ENCODE measurements at regions of chr19 and their contacts with region 1.

Region 1: DNA sequence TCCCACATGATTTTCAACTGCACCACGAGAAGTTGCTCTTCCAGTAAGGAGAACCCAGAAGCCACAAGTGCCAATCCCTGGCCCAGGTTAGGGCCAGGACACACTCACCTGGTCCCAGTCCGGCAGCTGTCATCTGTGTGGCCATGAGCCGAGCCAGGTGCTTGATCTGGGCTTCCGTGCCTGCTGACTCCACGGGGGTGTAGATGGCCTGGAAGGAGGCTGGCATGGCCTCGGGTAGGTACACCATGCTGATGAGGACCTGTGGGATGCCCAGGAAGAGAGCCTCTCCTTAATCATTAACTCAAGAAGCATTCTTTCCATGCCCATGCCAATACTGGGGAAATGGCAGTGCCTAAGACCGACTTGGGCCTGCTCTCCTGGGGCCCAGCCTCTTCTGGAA is 19.9 kb upstream of the RSPH6A start:
- DNase-seq: no peak
- ATAC-seq: no peak
- H3K4me3 ChIP-seq: no peak overlapping the region
- H3K27ac ChIP-seq: no peak overlapping the region
- H3K4me1 ChIP-seq: no peaks in the 10 kb centered on the region
- H3K27me3 ChIP-seq: no peaks in the 10 kb centered on the region
- CTCF ChIP-seq: no peak

Region 2: GRCh38 chr19:45782820-45783785 is 51.9 kb before region 1 on chr19:
- CTCF ChIA-PET with region 1: no interaction called
- POLR2A ChIA-PET with region 1: no interaction called
- in situ Hi-C with region 1: no loop called
- intact Hi-C with region 1: no loop called
- DNase-seq: no peak
- ATAC-seq: peak; percentile 24
- H3K4me3 ChIP-seq: 0 out of 4 replicates have a peak overlapping the region, but pooled peaks of 1 of the 2 experiments have one; percentile 24
- H3K27ac ChIP-seq: peak overlapping the region; percentile 87
- H3K4me1 ChIP-seq: peaks cover 25% of the 10 kb centered on the region
- H3K27me3 ChIP-seq: no peaks in the 10 kb centered on the region
- CTCF ChIP-seq: no peak

Region 3: GRCh38 chr19:46030812-46031550 is 196.0 kb after region 1 on chr19:
- CTCF ChIA-PET with region 1: no interaction called
- POLR2A ChIA-PET with region 1: interaction called, 17 read pairs
- in situ Hi-C with region 1: no loop called
- intact Hi-C with region 1: no loop called
- DNase-seq: no peak
- ATAC-seq: no peak
- H3K4me3 ChIP-seq: no peak overlapping the region
- H3K27ac ChIP-seq: no peak overlapping the region
- H3K4me1 ChIP-seq: no peaks in the 10 kb centered on the region
- H3K27me3 ChIP-seq: no peaks in the 10 kb centered on the region
- CTCF ChIP-seq: no peak

Measured in Panc1 (cell line).